SK-N-SH (cell line): ENCODE measurements at regions of chr15 and their contacts with region 1.

Region 1: DNA sequence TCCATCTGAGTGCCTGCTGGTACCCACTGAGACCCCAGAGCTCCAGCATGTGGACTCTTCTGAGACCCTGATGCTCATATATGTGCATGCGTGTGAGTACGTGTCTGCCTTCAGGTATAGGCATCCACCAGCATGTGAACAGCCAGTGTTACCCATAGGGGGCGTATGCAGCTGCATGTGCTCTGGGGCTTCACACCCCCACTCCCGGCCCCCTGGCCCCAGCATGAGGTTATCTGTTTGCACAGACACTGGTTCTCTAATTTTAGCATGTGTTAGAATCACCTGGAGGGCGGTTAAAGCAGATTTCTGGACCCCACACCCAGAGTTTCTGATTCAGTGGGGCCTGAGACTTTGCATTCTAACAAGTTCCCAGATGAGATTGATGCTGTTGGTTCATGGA is 824 bp upstream of the CILP start:
- DNase-seq: peak; percentile 52
- H3K4me3 ChIP-seq: no peak overlapping the region; a peak in 1 of 4 replicates
- H3K27ac ChIP-seq: no peak overlapping the region
- H3K4me1 ChIP-seq: peaks cover 9 to 38% of the 10 kb centered on the region in 2 experiments; a peak in 2 of 4 replicates
- H3K27me3 ChIP-seq: no peaks in the 10 kb centered on the region
- CTCF ChIP-seq: peak; percentile 54
- EP300 ChIP-seq: no peak
- RAD21 ChIP-seq: no peak

Region 2: GRCh38 chr15:64975390-64975789 is 236.7 kb before region 1 on chr15:
- CTCF ChIA-PET with region 1: no interaction called
- POLR2A ChIA-PET with region 1: no interaction called
- DNase-seq: no peak
- H3K4me3 ChIP-seq: no peak overlapping the region
- H3K27ac ChIP-seq: no peak overlapping the region
- H3K4me1 ChIP-seq: no peaks in the 10 kb centered on the region
- H3K27me3 ChIP-seq: no peaks in the 10 kb centered on the region
- CTCF ChIP-seq: no peak
- EP300 ChIP-seq: no peak
- RAD21 ChIP-seq: no peak

Region 3: GRCh38 chr15:65156692-65157091 is 55.4 kb before region 1 on chr15:
- CTCF ChIA-PET with region 1: no interaction called
- POLR2A ChIA-PET with region 1: no interaction called
- DNase-seq: no peak
- H3K4me3 ChIP-seq: no peak overlapping the region
- H3K27ac ChIP-seq: no peak overlapping the region
- H3K4me1 ChIP-seq: no peaks in the 10 kb centered on the region
- H3K27me3 ChIP-seq: no peaks in the 10 kb centered on the region
- CTCF ChIP-seq: no peak
- EP300 ChIP-seq: no peak
- RAD21 ChIP-seq: no peak

Region 4: GRCh38 chr15:65201905-65202304 is 10.2 kb before region 1 on chr15:
- CTCF ChIA-PET with region 1: interaction called, 10 read pairs
- POLR2A ChIA-PET with region 1: interaction called, 3 read pairs
- DNase-seq: no peak
- H3K4me3 ChIP-seq: no peak overlapping the region
- H3K27ac ChIP-seq: no peak overlapping the region
- H3K4me1 ChIP-seq: no peaks in the 10 kb centered on the region
- H3K27me3 ChIP-seq: no peaks in the 10 kb centered on the region; the same call in 1 of the 2 replicates
- CTCF ChIP-seq: no peak
- EP300 ChIP-seq: no peak
- RAD21 ChIP-seq: no peak

Region 5: GRCh38 chr15:65222891-65223290 is 10.8 kb after region 1 on chr15:
- CTCF ChIA-PET with region 1: interaction called, 12 read pairs
- POLR2A ChIA-PET with region 1: no interaction called
- DNase-seq: no peak
- H3K4me3 ChIP-seq: no peak overlapping the region
- H3K27ac ChIP-seq: no peak overlapping the region
- H3K4me1 ChIP-seq: no peaks in the 10 kb centered on the region
- H3K27me3 ChIP-seq: no peaks in the 10 kb centered on the region
- CTCF ChIP-seq: no peak
- EP300 ChIP-seq: no peak
- RAD21 ChIP-seq: no peak